Ovary (tissue), 10 donors: ENCODE measurements at regions of chr1 and their contacts with region 1.

Region 1: GRCh38 chr1:228510101-228510802 is 23.1 kb downstream of the RNF187 start:
- DNase-seq: no peak
- H3K4me3 ChIP-seq: no peak overlapping the region
- H3K27ac ChIP-seq: no peak overlapping the region
- H3K4me1 ChIP-seq: no peaks in the 10 kb centered on the region
- H3K27me3 ChIP-seq: no peaks in the 10 kb centered on the region
- CTCF ChIP-seq: no peak
- EP300 ChIP-seq: no peak
- POLR2A ChIP-seq: no peak

Region 2: GRCh38 chr1:226884966-226885820 is 1625.1 kb before region 1 on chr1:
- intact Hi-C with region 1: loop called in 1 of 4 experiments (anchors 5 kb)
- DNase-seq: no peak
- H3K4me3 ChIP-seq: no peak overlapping the region
- H3K27ac ChIP-seq: no peak overlapping the region
- H3K4me1 ChIP-seq: peaks cover 6% of the 10 kb centered on the region
- H3K27me3 ChIP-seq: no peaks in the 10 kb centered on the region
- CTCF ChIP-seq: no peak
- EP300 ChIP-seq: no peak
- POLR2A ChIP-seq: no peak

Region 3: GRCh38 chr1:228131766-228132165 is 378.5 kb before region 1 on chr1:
- intact Hi-C with region 1: loop called in 1 of 4 experiments (anchors 5 kb)
- DNase-seq: no peak
- H3K4me3 ChIP-seq: no peak overlapping the region
- H3K27ac ChIP-seq: no peak overlapping the region
- H3K4me1 ChIP-seq: no peaks in the 10 kb centered on the region
- H3K27me3 ChIP-seq: no peaks in the 10 kb centered on the region
- CTCF ChIP-seq: no peak
- EP300 ChIP-seq: no peak
- POLR2A ChIP-seq: no peak

Region 4: GRCh38 chr1:228457396-228458176 is 52.7 kb before region 1 on chr1:
- intact Hi-C with region 1: no loop called
- DNase-seq: peak; percentile 70 to 91 (median 82)
- H3K4me3 ChIP-seq: peak overlapping the region; percentile 42
- H3K27ac ChIP-seq: peak overlapping the region; percentile 69 to 72
- H3K4me1 ChIP-seq: peaks cover 3% of the 10 kb centered on the region
- H3K27me3 ChIP-seq: no peaks in the 10 kb centered on the region
- CTCF ChIP-seq: peak in 2 of 3 donors; percentile 53
- EP300 ChIP-seq: no peak
- POLR2A ChIP-seq: peak; percentile 28